Activated T-helper 2 cell treated with anti-CD3 and anti-CD28 coated beads, Interferon-gamma antibody, Interleukin-2, Interleukin-4, amounts not matched to agents 10 μg/mL and 5 μg/mL and 100 μg/mL, durations not matched to agents 14 hours and 24 hours and 36 hours (primary cell): ENCODE measurements at regions of chr3 and their contacts with region 1.

Region 1: GRCh38 chr3:179921500-179921899 is 115.2 kb downstream of the PEX5L start:
- DNase-seq: no peak
- H3K4me3 Mint-ChIP-seq: no peak overlapping the region
- H3K27ac Mint-ChIP-seq: no peak overlapping the region
- H3K4me1 Mint-ChIP-seq: peaks cover 18% of the 10 kb centered on the region
- H3K27me3 Mint-ChIP-seq: peaks cover 11% of the 10 kb centered on the region

Region 2: GRCh38 chr3:179811321-179812095 is 110.0 kb before region 1 on chr3:
- intact Hi-C with region 1: no loop called
- DNase-seq: peak; percentile 9
- H3K4me3 Mint-ChIP-seq: no peak overlapping the region
- H3K27ac Mint-ChIP-seq: no peak overlapping the region
- H3K4me1 Mint-ChIP-seq: peaks cover 4% of the 10 kb centered on the region
- H3K27me3 Mint-ChIP-seq: no peaks in the 10 kb centered on the region

Region 3: GRCh38 chr3:179967622-179968021 is 46.1 kb after region 1 on chr3:
- intact Hi-C with region 1: loop called (anchors 1 kb)
- DNase-seq: no peak
- H3K4me3 Mint-ChIP-seq: no peak overlapping the region
- H3K27ac Mint-ChIP-seq: peak overlapping the region; percentile 35
- H3K4me1 Mint-ChIP-seq: peaks cover 24% of the 10 kb centered on the region
- H3K27me3 Mint-ChIP-seq: peaks cover 12% of the 10 kb centered on the region